ENCODE measurements at regions of chr1 and their contacts with region 1.

Region 1: DNA sequence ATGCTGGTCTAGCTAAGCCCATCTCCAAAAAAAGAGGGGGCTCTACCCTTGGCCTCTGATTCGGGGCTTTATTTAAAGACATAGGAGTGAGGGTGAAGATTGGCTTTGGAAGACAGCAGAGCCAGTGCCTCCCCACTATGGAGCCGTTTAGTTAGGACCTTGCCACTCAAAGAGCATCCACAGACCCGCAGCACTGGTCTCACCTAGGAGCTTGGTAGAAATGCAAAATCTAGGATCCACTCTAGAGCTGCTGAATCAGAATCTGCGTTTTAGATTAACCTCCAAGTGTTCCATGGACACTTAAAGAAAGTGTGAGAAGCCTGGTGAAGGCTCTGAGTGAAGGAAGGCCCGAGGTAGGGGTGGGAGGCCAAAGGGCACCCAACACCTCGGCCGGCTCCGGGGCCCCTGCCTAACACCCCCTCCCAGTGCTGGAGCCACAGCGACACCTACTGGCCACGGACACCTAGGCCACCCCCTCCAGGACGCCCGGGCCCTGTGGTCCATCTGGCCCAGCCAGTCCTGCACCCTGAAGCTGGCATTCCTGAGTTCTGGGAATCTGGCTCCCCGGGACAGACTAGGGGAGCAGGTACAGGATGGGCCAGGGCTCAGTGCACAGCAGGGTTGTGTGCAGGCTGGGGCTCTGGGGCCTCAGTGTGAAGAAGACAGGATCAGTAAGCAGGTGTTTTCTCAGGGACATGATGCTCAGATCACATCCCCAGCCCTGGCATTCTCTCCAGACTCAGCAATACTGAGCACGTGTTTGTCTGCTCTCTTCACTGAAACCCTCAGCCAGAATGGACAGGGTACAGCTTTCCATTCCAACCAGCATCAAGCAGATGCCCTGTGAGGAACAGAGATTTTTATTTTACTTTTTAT is 79.2 kb downstream of the TMEM53 start:
- DNase-seq: peak; percentile 56 to 77 (median 69)
- H3K4me3 ChIP-seq: no peak overlapping the region
- H3K27ac ChIP-seq: peak overlapping the region in 1 of 2 experiments; percentile 15
- H3K4me1 ChIP-seq: peaks cover 0 to 22% (median 19%) of the 10 kb centered on the region in 4 experiments
- H3K27me3 ChIP-seq: no peaks in the 10 kb centered on the region

Region 2: DNA sequence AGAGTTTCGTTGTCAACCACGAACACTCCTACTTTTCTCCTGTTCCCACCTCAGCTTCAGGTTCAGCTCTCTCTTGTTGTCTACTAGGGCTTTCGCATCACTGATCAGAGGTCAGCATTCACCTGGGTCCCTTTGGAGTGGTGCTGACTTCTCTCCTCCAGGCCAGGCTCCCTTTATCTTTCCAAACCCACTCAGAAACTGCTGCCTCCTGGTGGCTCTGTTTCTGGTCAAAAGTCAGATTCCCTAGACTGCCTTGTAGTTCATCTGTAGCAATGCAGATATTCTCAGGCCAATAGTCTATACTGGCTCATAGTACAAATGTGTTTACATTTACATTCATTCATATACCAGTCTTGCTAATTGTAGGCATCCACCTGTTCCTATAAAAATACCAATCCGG is 233.6 kb before region 1 on chr1:
- CTCF ChIA-PET with region 1: interaction called, 14 read pairs
- POLR2A ChIA-PET with region 1: no interaction called
- DNase-seq: peak in 2 of 3 donors; percentile 13 to 21
- H3K4me3 ChIP-seq: no peak overlapping the region
- H3K27ac ChIP-seq: no peak overlapping the region
- H3K4me1 ChIP-seq: no peaks in the 10 kb centered on the region
- H3K27me3 ChIP-seq: peaks cover 0 to 2% (median 0%) of the 10 kb centered on the region in 5 experiments

Region 3: GRCh38 chr1:44377925-44378784 is 217.0 kb before region 1 on chr1:
- CTCF ChIA-PET with region 1: interaction called, 170 read pairs
- POLR2A ChIA-PET with region 1: no interaction called
- DNase-seq: peak; percentile 80 to 88 (median 83)
- H3K4me3 ChIP-seq: no peak overlapping the region
- H3K27ac ChIP-seq: no peak overlapping the region
- H3K4me1 ChIP-seq: peaks cover 0 to 3% (median 1%) of the 10 kb centered on the region in 4 experiments
- H3K27me3 ChIP-seq: no peaks in the 10 kb centered on the region

Region 4: DNA sequence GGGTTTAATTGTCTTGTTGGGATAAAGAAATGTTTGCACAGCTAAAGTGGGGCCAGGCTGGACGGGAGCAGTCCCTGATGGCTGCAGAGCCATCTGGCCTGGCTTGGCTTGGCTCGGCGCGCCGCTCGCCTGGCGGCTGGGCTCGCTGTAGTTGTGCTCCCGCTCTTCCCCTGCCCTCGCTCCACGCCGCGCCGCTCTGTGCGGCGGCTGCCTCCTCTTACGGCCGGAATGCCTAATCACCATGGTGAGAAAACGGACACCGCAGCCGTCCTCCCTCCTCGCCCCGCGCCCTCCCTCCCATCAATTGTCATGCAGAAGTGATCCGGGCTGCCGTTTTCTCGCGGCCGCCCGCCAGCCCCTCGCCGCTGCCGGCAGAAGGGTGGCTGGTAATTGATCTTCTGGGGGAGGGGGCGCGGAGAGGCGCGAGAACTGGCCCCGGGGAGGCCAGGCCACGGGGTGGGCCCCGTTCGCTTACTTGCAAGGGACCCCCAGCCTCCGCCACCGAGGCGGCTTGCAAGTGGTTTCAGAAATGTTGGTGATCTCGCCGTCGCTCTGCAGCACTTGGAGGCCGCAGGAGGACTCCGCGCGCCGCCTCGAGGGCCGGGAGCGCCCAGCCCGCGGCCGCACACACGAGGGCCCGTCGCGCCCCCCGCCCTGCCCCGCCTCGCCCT is 177.6 kb before region 1 on chr1:
- CTCF ChIA-PET with region 1: no interaction called
- POLR2A ChIA-PET with region 1: no interaction called
- DNase-seq: peak; percentile 84 to 94 (median 91)
- H3K4me3 ChIP-seq: peak overlapping the region in 6 of 7 experiments; percentile 46 to 79 (median 64)
- H3K27ac ChIP-seq: peak overlapping the region; percentile 67 to 84
- H3K4me1 ChIP-seq: peaks cover 45 to 98% (median 90%) of the 10 kb centered on the region in 4 experiments
- H3K27me3 ChIP-seq: no peaks in the 10 kb centered on the region

Region 5: GRCh38 chr1:44549510-44549909 is 45.6 kb before region 1 on chr1:
- CTCF ChIA-PET with region 1: interaction called, 13 read pairs
- POLR2A ChIA-PET with region 1: no interaction called
- DNase-seq: no peak
- H3K4me3 ChIP-seq: no peak overlapping the region
- H3K27ac ChIP-seq: no peak overlapping the region
- H3K4me1 ChIP-seq: peaks cover 0 to 4% (median 1%) of the 10 kb centered on the region in 4 experiments
- H3K27me3 ChIP-seq: no peaks in the 10 kb centered on the region

Region 6: DNA sequence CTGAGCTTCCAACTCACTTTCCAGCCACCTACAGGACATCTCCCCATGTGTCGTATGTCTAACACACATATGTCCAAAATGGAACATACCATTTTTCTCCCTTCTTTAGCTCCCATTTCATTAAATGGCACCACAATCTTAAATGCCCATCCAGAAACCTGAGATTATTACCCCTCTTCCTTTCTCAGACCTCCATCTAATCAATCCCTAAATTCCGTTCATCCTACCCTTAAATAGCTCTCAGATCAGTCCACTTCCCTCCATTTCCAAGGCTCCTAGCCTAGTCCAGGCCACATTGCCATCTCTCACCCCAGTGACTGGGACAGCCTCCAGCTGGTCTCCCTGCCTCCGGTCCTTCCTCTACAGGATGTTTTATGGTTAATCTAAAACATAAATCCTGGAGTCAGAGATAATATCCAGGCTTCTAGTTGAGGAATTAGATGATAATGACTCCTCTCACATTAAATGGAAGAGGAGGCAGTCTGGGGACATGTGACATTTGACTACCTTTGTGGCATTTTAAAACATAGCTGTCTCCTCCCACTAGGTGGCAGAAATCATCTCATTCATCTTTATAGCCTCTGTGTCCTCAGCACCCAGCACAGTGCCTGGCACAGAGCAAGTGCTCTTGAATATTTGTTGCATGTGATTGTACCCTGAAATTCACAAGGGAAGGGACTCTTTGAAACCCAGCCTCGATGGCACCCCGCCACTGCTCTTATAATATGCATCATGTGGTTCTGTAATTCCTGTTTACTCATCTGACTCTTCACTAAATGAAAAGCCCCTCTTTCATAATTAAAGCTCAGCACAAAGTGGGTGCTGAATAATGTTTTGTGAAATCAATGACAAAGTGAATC is 23.2 kb before region 1 on chr1:
- CTCF ChIA-PET with region 1: interaction called, 52 read pairs
- POLR2A ChIA-PET with region 1: no interaction called
- DNase-seq: peak in 2 of 3 donors; percentile 50 to 52
- H3K4me3 ChIP-seq: no peak overlapping the region
- H3K27ac ChIP-seq: no peak overlapping the region
- H3K4me1 ChIP-seq: peaks cover 0 to 10% (median 0%) of the 10 kb centered on the region in 4 experiments
- H3K27me3 ChIP-seq: no peaks in the 10 kb centered on the region

Region 7: GRCh38 chr1:44609412-44609767 is 14.3 kb after region 1 on chr1:
- CTCF ChIA-PET with region 1: interaction called, 14 read pairs
- POLR2A ChIA-PET with region 1: no interaction called
- DNase-seq: no peak
- H3K4me3 ChIP-seq: no peak overlapping the region
- H3K27ac ChIP-seq: no peak overlapping the region
- H3K4me1 ChIP-seq: no peaks in the 10 kb centered on the region
- H3K27me3 ChIP-seq: no peaks in the 10 kb centered on the region

Region 8: DNA sequence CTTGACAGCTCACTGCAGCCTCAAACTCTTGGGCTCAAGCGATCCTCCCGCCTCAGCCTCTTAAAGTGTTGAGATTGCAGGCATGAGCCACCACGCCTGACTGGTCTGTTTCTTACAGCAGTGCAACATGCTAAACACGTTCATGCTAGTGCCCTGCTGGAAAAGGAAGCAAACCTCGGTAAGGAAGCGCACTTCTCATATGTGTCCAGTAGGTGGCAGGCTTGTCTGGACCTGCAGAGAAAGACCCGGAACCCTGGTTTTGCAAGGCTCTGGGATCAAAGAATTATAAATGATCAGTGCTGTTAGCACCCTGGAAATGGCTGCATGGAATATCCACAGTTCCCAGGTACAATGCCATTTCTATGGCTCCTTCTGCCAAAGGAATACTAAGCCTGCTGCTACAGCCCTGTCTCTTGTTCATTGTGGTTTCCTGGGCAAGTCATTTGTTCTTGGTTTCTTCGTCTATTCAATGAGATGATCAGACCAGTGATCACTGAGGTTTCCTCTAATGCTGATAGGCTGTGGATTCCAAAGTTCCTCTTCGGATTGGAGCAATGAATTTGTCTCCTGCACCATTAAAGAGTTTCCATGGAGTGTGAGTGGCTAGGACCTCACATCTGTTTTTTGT is 119.9 kb after region 1 on chr1:
- CTCF ChIA-PET with region 1: no interaction called
- POLR2A ChIA-PET with region 1: no interaction called
- DNase-seq: peak; percentile 85 to 90 (median 90)
- H3K4me3 ChIP-seq: peak overlapping the region in 2 of 7 experiments; percentile 45 to 56
- H3K27ac ChIP-seq: no peak overlapping the region
- H3K4me1 ChIP-seq: peaks cover 3 to 43% (median 36%) of the 10 kb centered on the region in 4 experiments
- H3K27me3 ChIP-seq: no peaks in the 10 kb centered on the region

Region 9: DNA sequence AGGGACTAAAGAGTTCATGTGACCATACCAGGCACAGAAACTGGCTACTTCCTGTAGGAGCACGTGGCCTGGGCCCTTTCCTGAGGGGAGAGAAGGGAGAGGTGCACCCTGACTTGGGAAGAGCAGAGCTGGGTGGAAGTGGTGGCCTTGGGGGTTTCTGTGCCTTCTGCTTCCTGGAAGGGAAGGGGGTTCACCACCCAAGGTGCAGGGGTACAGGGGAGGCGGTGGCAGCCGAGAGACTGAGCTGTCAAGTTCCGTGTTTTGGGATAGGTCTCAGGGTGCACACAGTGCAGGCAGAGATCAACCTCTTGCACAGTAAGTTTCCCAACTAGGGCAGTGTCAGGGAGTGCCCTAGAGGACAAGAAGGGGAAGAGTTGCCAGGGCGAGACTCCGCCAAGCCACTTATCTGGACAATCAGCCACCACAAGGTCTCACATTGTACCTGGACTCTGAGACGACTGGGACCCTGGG is 405.9 kb after region 1 on chr1:
- CTCF ChIA-PET with region 1: no interaction called
- POLR2A ChIA-PET with region 1: no interaction called
- DNase-seq: peak in 2 of 3 donors; percentile 24 to 40
- H3K4me3 ChIP-seq: no peak overlapping the region
- H3K27ac ChIP-seq: no peak overlapping the region
- H3K4me1 ChIP-seq: peaks cover 2 to 10% (median 8%) of the 10 kb centered on the region in 4 experiments
- H3K27me3 ChIP-seq: no peaks in the 10 kb centered on the region

Measured in common myeloid progenitor, CD34-positive (primary cell).